Activated naive CD4-positive, alpha-beta T cell treated with anti-CD3 and anti-CD28 coated beads for 36 hours (primary cell): ENCODE measurements at regions of chrX and their contacts with region 1.

Region 1: DNA sequence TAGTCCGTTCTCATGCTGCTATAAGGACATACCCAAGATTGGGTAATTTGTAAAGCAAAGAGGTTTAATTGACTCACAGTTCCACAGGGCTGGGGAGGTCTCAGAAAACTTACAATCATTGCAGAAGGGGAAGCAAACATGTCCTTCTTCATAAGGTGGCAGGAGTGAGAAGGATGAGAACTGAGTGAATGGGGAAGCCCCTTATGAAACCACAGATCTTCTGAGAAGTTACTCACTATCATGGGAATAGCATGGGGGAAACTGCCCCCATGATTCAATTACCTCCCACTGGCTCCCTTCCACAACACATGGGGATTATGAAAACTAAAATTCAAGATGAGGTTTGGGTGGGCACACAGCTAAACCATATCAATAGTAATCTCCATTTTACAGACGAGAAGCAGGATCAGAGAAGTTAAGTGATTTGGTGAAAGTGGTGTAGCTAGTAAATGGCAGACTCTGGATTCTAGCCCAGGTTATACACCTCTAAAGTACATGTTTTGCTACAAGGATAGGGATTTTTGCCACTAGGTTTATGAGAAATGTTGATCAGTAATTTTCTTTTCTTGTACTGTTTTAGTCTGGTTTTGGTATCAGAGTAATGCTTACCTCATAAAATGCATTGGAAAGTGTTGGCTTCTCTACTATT is 47.3 kb upstream of the C1GALT1C1 start:
- DNase-seq: peak; percentile 35
- H3K4me3 Mint-ChIP-seq: no peak overlapping the region
- H3K27ac Mint-ChIP-seq: peak overlapping the region; percentile 85
- H3K4me1 Mint-ChIP-seq: peaks cover 31% of the 10 kb centered on the region
- H3K27me3 Mint-ChIP-seq: no peaks in the 10 kb centered on the region

Region 2: DNA sequence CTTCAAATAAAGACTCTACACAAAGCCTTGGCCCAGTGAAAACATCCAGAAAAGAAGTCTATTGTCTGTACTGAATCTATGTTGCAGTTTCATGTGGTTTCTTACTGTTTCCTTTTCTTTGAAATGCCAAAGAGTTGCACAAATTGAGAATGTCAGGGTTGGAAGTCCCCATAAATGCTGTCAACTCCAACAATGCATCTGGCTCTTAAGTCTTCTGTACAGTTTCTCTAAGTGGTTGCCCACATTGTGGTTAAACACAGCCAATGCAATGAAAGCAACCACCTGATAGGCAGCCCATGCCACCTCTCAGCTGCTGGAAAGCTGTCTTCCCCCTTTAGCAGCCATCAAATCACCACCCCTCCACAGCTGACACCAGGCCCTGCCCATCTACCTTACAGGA is 19.9 kb after region 1 on chrX:
- CTCF ChIA-PET with region 1: no interaction called
- intact Hi-C with region 1: loop called (anchors 1 kb)
- DNase-seq: peak; percentile 69
- H3K4me3 Mint-ChIP-seq: no peak overlapping the region
- H3K27ac Mint-ChIP-seq: peak overlapping the region; percentile 83
- H3K4me1 Mint-ChIP-seq: peaks cover 27% of the 10 kb centered on the region
- H3K27me3 Mint-ChIP-seq: no peaks in the 10 kb centered on the region

Region 3: GRCh38 chrX:120736989-120737388 is 59.9 kb after region 1 on chrX:
- CTCF ChIA-PET with region 1: no interaction called
- intact Hi-C with region 1: loop called (anchors 1 kb)
- DNase-seq: peak; percentile 21
- H3K4me3 Mint-ChIP-seq: no peak overlapping the region
- H3K27ac Mint-ChIP-seq: peak overlapping the region; percentile 28
- H3K4me1 Mint-ChIP-seq: peaks cover 25% of the 10 kb centered on the region
- H3K27me3 Mint-ChIP-seq: no peaks in the 10 kb centered on the region

Region 4: DNA sequence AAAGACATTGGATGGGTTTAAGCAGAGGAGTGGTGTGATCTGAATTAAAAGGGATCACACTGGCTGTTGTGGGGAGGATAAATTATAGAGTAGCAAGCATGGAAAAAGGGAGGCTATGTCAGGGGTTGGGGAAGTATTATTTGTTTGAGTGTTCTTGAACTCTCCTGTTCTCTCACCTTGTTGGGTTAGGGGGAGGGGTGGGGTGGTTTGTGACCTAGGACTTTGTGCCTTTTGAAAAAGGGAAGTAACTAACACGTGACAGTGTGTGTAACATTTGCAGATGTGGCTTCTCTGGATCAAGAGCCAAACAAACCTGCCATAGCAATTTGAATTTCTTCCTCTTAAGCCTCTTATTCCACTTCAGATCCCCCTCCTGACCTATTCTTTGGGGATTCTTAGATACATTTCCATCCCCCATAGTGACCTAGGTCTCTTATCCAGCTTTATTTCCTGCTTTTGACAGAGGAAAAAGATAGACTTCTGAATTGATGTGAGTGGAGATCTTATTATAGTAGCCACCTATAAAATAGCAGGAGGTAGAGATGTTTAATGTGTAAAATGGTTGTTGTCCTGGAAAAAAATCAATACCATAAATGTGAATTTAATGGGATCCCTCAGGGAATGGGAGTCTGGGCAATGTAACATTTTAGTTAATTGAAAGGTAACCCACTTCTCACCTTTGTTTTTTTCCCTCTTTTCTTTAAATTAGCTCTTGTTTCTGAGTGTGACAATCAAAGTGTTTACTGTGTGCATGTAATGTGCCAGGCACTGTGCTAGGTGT is 78.1 kb after region 1 on chrX:
- CTCF ChIA-PET with region 1: no interaction called
- intact Hi-C with region 1: loop called (anchors 2 kb)
- DNase-seq: peak; percentile 40
- H3K4me3 Mint-ChIP-seq: no peak overlapping the region
- H3K27ac Mint-ChIP-seq: peak overlapping the region; percentile 67
- H3K4me1 Mint-ChIP-seq: peaks cover 45% of the 10 kb centered on the region
- H3K27me3 Mint-ChIP-seq: no peaks in the 10 kb centered on the region

Region 5: DNA sequence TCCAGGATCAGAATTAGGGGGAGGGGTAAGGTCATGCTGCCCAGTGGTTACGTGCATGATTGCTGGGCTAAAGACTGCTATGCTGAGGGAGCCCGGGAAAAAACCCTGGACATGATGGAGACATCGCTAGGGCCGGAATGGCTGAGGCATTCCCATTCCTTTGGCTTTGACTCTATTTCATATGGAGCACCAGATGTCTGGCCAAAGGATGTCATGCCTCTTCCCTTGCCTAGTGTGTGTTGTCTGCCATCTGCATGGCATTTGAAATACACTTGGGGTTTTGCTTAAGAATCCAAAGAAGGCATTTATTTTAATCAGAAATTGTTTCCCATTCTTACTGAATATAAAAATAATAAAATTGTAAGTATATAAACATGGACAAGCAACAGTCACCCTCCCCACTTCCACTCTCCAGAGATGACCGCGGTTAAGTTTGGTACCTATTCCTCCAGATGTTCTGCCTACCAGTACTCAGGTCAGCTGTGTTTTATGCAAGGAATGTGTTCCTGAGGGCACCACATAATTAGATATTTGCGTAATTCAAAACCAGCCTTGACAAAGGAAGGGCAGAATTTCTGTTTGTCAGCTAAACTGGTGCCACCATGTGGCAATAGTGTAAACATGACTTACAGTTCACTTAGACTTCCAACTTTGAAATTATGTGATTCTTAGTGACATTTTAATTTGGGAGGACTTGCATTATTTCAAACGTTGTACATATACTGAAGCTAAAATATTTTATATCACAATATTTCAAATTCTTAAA is 92.6 kb after region 1 on chrX:
- CTCF ChIA-PET with region 1: interaction called, 4 read pairs
- intact Hi-C with region 1: loop called (anchors 2 kb)
- DNase-seq: peak; percentile 21
- H3K4me3 Mint-ChIP-seq: no peak overlapping the region
- H3K27ac Mint-ChIP-seq: no peak overlapping the region
- H3K4me1 Mint-ChIP-seq: peaks cover 2% of the 10 kb centered on the region
- H3K27me3 Mint-ChIP-seq: no peaks in the 10 kb centered on the region